ENCODE measurements at regions of chr19 and their contacts with region 1.

Region 1: DNA sequence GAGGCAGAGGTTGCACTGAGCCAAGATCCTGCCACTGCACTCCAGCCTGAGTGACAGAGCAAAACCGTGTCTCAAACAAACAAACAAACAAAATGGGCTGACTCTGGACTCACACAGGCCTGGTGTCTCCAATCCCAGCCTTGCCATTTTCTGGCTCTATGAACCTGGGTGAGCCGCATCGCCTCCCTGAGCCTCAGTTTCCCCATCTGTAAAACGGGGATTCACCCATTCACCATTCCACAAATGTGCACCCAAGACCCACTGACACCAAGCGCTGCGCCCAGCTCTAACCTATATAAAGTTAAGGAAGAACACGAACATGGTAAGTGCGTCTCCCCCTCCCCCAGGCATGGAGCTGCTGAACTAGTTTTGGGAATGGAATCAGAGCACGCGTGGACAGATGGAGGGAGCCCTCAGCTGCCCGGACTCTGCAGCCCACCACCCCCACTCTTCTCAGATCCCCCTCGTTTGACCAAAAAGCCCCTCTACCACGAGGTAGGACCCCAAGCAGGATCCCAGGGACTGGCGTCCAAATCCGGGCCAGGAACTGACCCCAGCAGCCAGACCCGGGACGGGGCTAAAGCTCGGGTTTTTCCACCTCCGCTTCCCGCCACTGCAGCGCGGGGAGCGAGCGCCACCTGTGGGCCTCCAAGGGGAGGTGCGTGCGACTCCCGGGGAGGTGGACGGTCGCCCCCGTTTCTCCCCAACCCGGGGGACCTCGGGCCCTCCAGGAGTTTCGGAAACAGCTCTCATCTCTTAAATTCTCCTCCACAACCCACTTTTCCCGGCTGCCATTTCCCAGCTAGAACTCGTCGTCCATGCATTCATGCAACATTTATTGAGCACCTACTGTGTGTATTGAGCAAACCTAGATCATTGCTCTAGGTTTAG is 33.0 kb upstream of the ADGRE5 start:
- DNase-seq: peak; percentile 25 to 88 (median 63)
- ATAC-seq: peak; percentile 87 to 99 (median 94)
- H3K4me3 ChIP-seq: peak overlapping the region in 1 of 4 donors; percentile 20
- H3K27ac ChIP-seq: no peak overlapping the region
- H3K4me1 ChIP-seq: no peaks in the 10 kb centered on the region
- H3K27me3 ChIP-seq: peaks cover 0 to 11% (median 0%) of the 10 kb centered on the region in 4 donors
- CTCF ChIP-seq: peak; percentile 86 to 90 (median 90)

Region 2: GRCh38 chr19:14150041-14150769 is 198.0 kb before region 1 on chr19:
- intact Hi-C with region 1: loop called in 1 of 3 experiments (anchors 5 kb)
- DNase-seq: no peak
- ATAC-seq: no peak
- H3K4me3 ChIP-seq: no peak overlapping the region
- H3K27ac ChIP-seq: peak overlapping the region in 1 of 4 donors; percentile 2
- H3K4me1 ChIP-seq: no peaks in the 10 kb centered on the region
- H3K27me3 ChIP-seq: no peaks in the 10 kb centered on the region
- CTCF ChIP-seq: no peak

Region 3: DNA sequence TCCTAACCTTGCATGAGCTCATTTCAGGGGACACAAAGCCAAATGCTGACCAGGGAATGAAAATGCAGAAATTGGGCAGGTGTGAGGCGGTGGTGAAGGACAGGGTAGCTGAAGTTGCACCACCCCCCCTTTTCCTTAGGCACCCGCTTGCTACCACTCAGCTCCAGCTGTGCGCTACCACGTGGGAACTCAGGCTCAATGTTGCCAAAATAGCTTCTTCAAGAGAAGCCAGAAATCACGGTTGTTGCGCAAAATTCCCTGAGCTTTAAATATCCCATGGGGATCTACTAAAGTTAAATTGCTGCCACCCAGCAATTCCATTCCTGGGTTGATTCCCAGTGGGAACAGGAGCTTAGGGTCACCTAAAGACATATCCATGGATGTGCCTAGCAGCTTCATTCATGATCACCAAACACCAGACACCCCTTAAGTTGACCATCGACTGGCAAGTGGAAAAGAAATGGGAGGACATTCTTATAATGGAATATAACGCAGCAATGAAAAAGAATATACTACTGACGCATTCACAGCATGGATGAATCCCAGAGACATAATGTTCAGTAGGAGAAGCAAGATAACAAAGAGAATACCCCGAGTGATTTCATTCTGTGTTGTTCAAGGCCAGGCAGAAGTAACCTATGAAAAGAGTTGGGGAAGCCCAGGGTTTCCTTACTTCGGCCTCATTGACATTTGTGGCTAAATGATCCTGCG is 129.5 kb before region 1 on chr19:
- intact Hi-C with region 1: no loop called
- DNase-seq: no peak
- ATAC-seq: no peak
- H3K4me3 ChIP-seq: no peak overlapping the region
- H3K27ac ChIP-seq: no peak overlapping the region
- H3K4me1 ChIP-seq: no peaks in the 10 kb centered on the region
- H3K27me3 ChIP-seq: no peaks in the 10 kb centered on the region
- CTCF ChIP-seq: no peak

Region 4: DNA sequence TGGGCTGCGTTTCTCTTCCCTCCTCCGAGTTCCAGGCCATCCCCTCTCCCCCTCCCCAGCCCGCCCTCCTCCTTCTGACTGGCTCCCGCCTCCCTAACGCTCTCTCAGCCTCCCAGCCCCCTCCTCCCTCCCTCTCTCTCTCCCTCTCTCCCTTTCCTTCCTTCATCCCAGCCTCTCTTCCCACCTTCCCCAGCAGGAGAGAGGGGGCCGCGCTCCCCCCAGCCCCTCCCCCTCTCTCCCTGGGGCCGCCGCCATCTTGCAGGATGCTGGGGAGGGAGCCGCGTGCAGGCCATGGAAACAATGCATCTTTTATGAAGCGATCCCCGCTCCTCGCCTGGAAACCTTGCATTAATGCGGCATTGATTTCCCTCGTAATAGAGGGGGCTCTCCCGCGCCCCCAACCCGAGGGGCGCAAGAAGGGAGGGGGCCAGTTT is 99.6 kb before region 1 on chr19:
- intact Hi-C with region 1: no loop called
- DNase-seq: peak in 1 of 6 donors; percentile 39
- ATAC-seq: peak in 3 of 4 donors; percentile 71 to 81 (median 74)
- H3K4me3 ChIP-seq: peak overlapping the region in 2 of 4 donors; percentile 31 to 42
- H3K27ac ChIP-seq: no peak overlapping the region
- H3K4me1 ChIP-seq: no peaks in the 10 kb centered on the region
- H3K27me3 ChIP-seq: no peaks in the 10 kb centered on the region
- CTCF ChIP-seq: no peak

Region 5: DNA sequence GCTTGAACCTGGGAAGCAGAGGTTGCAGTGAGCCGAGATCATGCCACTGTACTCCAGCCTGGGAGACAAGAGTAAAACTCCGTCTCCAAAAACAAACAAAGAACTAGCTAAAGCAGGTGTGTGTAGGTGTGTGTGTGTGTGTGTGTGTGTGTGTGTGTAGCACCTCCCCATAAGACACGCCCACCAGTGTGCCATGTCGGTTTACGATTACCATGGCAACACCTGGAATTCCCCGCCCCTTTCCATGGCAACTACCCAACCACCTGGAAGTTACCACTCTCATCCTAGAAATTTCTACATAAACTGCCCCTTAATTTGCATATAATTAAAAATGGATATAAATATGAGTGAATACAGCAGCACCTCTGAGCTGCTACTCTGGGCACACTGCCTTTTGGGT is 47.9 kb before region 1 on chr19:
- intact Hi-C with region 1: no loop called
- DNase-seq: no peak
- ATAC-seq: no peak
- H3K4me3 ChIP-seq: no peak overlapping the region
- H3K27ac ChIP-seq: no peak overlapping the region
- H3K4me1 ChIP-seq: no peaks in the 10 kb centered on the region
- H3K27me3 ChIP-seq: no peaks in the 10 kb centered on the region
- CTCF ChIP-seq: no peak

Measured in pancreas (tissue), 10 donors.